Gastrocnemius medialis (tissue), 4 donors: ENCODE measurements at regions of chr1 and their contacts with region 1.

Region 1: GRCh38 chr1:56189946-56190792 is 389.2 kb downstream of the PLPP3 start:
- DNase-seq: peak in 1 of 2 donors; percentile 25
- ATAC-seq: peak; percentile 42 to 74
- H3K4me3 ChIP-seq: no peak overlapping the region
- H3K27ac ChIP-seq: peak overlapping the region in 3 of 4 donors; percentile 36 to 43 (median 37)
- H3K4me1 ChIP-seq: peaks cover 24 to 27% of the 10 kb centered on the region in 2 donors
- H3K27me3 ChIP-seq: no peaks in the 10 kb centered on the region
- CTCF ChIP-seq: peak in 4 of 5 experiments; percentile 16 to 54 (median 47)
- POLR2A ChIP-seq: no peak

Region 2: DNA sequence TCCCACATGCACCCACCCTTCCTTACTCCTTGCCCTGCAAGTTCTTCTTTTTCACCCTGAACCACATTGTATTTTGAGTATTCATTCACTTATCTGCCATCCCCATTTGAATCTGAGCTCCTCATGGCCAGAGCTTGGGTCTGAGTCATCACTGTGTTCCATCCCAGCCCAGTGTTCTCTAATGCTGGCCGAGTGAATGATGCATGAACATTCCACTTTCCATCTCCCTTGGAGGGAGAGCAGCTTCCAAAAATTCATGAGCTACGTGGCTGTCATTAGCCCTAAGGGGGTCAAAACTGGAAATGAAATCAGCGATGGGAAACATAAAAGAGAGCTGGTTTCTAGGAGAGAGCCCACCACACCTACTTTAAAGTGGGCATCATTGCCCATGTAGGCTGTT is 788.0 kb before region 1 on chr1:
- in situ Hi-C with region 1: no loop called
- intact Hi-C with region 1: no loop called
- DNase-seq: no peak
- ATAC-seq: no peak
- H3K4me3 ChIP-seq: no peak overlapping the region
- H3K27ac ChIP-seq: no peak overlapping the region
- H3K4me1 ChIP-seq: no peaks in the 10 kb centered on the region
- H3K27me3 ChIP-seq: no peaks in the 10 kb centered on the region
- CTCF ChIP-seq: no peak
- POLR2A ChIP-seq: no peak

Region 3: DNA sequence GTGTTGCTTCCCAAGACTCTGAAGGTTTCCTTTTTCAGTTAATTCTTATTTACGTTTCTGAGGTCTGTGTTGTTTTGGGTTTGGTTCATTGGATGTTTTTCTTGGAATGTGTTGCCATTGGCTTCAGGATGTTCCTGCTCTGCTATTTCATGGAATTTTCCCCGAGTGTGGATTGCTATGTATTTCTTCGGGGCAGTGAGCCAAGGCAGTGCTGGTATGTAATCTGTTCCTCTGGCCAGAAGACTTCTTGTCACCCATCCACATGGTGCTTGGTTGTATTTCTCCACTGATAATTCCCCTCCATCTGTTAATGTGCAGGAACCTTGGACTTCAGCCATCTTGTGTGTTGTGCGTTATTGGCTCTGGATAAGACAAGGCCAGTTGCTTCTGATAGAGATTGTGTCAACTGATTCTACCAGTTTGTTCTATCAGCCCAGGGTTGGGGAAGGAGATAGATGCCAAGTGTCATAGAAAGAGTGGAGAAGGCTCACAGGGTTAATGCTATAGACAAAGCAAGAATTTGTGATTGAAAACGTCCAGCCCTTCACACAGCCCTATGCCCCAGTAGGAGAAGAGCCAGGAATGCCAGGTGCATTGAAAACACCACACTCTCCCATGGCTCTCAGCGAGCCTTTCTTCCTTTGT is 116.0 kb before region 1 on chr1:
- in situ Hi-C with region 1: no loop called
- intact Hi-C with region 1: loop called (anchors 5 kb)
- DNase-seq: peak; percentile 59 to 75
- ATAC-seq: peak; percentile 73
- H3K4me3 ChIP-seq: peak overlapping the region in 1 of 4 donors; percentile 1
- H3K27ac ChIP-seq: peak overlapping the region; percentile 70 to 82 (median 76)
- H3K4me1 ChIP-seq: peaks cover 21 to 23% of the 10 kb centered on the region in 2 donors
- H3K27me3 ChIP-seq: no peaks in the 10 kb centered on the region
- CTCF ChIP-seq: no peak
- POLR2A ChIP-seq: no peak

Region 4: GRCh38 chr1:56146449-56146848 is 43.7 kb before region 1 on chr1:
- in situ Hi-C with region 1: no loop called
- intact Hi-C with region 1: no loop called
- DNase-seq: peak; percentile 22 to 41
- ATAC-seq: peak; percentile 84 to 95
- H3K4me3 ChIP-seq: no peak overlapping the region
- H3K27ac ChIP-seq: peak overlapping the region; percentile 33 to 72 (median 48)
- H3K4me1 ChIP-seq: peaks cover 20 to 29% of the 10 kb centered on the region in 2 donors
- H3K27me3 ChIP-seq: no peaks in the 10 kb centered on the region
- CTCF ChIP-seq: no peak
- POLR2A ChIP-seq: no peak

Region 5: GRCh38 chr1:56167596-56167995 is 22.6 kb before region 1 on chr1:
- in situ Hi-C with region 1: no loop called
- intact Hi-C with region 1: loop called (anchors 1 kb)
- DNase-seq: no peak
- ATAC-seq: no peak
- H3K4me3 ChIP-seq: no peak overlapping the region
- H3K27ac ChIP-seq: no peak overlapping the region
- H3K4me1 ChIP-seq: no peaks in the 10 kb centered on the region
- H3K27me3 ChIP-seq: no peaks in the 10 kb centered on the region
- CTCF ChIP-seq: no peak
- POLR2A ChIP-seq: no peak

Region 6: DNA sequence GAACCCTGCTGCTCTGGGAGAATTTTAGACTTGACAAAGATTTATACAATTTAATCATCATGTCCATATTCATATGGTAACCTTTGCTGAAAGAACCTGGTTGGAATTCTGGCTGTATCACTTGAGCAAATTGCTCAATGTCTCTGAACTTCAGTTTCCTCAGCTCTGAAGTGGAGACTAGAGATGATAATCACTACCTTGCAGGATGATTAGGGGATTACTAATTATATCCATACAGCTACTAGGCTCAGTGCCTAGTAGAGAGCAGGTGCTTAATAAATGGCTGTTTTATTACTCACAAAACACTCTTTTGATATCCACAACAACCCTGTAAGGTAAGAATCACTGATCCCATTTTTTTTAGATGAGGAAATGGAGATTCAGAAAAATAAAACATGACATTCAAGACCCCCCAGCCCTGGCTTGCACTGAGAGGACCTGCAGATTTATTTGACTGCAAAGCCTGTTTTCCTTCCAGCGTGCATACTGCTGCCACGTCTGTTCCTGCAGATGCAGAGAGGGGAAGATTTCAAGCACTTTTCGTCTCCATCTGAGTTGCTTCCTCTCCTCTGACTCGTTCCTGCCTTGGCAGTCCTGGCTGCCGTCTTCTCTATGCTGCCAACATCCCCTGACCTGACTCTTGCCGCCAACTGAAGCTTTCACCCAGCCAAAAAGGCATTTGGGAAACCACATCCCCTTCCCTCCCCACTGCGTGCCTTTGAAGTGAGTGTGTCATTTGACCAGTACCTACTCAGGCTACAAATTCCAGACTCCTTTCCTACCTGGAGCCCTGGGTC is 186.2 kb after region 1 on chr1:
- in situ Hi-C with region 1: no loop called
- intact Hi-C with region 1: loop called (anchors 5 kb)
- DNase-seq: peak; percentile 64 to 84
- ATAC-seq: peak; percentile 92
- H3K4me3 ChIP-seq: no peak overlapping the region
- H3K27ac ChIP-seq: peak overlapping the region; percentile 74 to 81 (median 76)
- H3K4me1 ChIP-seq: peaks cover 52 to 60% of the 10 kb centered on the region in 2 donors
- H3K27me3 ChIP-seq: no peaks in the 10 kb centered on the region
- CTCF ChIP-seq: no peak
- POLR2A ChIP-seq: no peak